Activated CD8-positive, alpha-beta T cell treated with anti-CD3 and anti-CD28 coated beads, Interleukin-2, amount 10 ng/mL, durations not matched to agents 7 days and 5 days (primary cell): ENCODE measurements at regions of chr2 and their contacts with region 1.

Region 1: DNA sequence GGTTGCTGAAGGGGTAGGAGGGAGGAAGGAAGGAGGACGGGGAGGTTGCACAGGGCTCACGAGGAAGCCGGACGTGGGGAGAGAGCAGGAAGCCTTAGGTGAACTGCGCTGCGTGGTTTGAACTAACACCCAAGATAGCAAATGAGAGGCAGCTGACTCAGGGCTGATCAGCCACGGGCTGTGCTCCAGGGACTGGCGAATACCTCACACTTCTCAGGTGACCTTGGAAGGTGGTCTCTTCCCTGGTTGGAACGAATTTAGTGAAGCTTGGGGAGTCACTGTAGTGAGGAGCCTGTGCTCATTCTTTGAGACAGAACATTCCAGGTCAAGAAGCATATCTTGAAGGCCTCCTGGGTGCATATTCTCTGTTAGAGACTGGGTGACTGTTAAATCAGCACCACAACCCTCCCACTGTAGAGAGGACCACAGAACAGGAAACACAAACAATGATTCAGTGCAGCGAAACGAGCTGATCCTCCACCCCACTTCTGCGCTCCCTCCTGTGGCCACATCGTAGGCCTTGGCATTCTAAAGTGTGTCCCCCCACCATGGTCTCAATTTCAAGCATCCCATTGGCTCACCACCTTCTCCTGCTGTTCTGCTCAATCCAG is 33.8 kb downstream of the TOGARAM2 start:
- DNase-seq: peak; percentile 90
- ATAC-seq: peak; percentile 79
- H3K4me3 Mint-ChIP-seq: peak overlapping the region; percentile 87
- H3K27ac Mint-ChIP-seq: peak overlapping the region; percentile 95
- H3K4me1 Mint-ChIP-seq: peaks cover 74% of the 10 kb centered on the region
- H3K27me3 Mint-ChIP-seq: no peaks in the 10 kb centered on the region

Region 2: DNA sequence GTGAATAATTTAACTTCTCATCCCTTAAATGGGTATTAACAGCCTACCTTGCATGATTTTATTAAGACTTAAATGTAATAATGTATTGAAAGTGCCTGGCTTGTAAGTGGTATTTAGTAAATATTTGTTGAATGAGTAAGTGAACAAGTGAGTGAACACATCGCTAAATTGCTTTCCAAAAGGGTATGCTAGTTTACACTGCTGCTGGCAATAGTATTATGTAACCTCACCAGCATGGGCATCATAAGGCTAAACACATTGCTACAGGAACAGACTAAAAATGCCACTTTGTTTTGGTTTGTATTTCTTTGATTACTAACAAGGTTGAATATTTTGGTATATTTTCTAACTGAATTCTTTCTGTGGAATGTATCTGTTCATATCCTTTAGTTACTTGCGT is 110.6 kb before region 1 on chr2:
- CTCF ChIA-PET with region 1: no interaction called
- POLR2A ChIA-PET with region 1: no interaction called
- DNase-seq: no peak
- ATAC-seq: no peak
- H3K4me3 Mint-ChIP-seq: no peak overlapping the region
- H3K27ac Mint-ChIP-seq: no peak overlapping the region
- H3K4me1 Mint-ChIP-seq: peaks cover 18% of the 10 kb centered on the region
- H3K27me3 Mint-ChIP-seq: no peaks in the 10 kb centered on the region

Region 3: DNA sequence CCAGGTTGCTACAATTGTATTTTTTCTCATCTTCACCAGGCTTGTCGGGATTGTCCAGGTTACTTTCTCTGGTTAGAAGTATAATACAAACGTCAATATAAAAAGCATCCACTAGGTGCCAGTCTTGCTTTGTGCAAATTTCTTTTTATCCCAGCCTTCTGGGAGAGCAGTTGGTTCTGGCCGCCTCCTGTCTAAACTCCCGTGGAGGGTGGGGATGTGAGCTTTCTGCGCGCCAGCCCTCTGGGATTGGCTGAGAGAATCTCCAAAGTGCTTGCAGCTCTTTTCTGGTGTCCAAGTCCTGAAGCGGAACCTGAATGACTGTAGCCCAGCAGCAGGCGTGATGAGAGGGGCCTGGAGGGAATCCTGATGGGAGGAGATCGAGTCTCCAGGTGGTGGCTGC is 56.2 kb before region 1 on chr2:
- CTCF ChIA-PET with region 1: interaction called, 18 read pairs
- POLR2A ChIA-PET with region 1: interaction called, 3 read pairs
- DNase-seq: peak; percentile 64
- ATAC-seq: peak; percentile 60
- H3K4me3 Mint-ChIP-seq: no peak overlapping the region
- H3K27ac Mint-ChIP-seq: no peak overlapping the region
- H3K4me1 Mint-ChIP-seq: peaks cover 19% of the 10 kb centered on the region
- H3K27me3 Mint-ChIP-seq: peaks cover 3% of the 10 kb centered on the region

Region 4: GRCh38 chr2:29000481-29000880 is 14.4 kb before region 1 on chr2:
- CTCF ChIA-PET with region 1: interaction called, 25 read pairs
- POLR2A ChIA-PET with region 1: interaction called, 6 read pairs
- DNase-seq: peak; percentile 64
- ATAC-seq: peak; percentile 88
- H3K4me3 Mint-ChIP-seq: peak overlapping the region; percentile 27
- H3K27ac Mint-ChIP-seq: peak overlapping the region; percentile 27
- H3K4me1 Mint-ChIP-seq: peaks cover 30% of the 10 kb centered on the region
- H3K27me3 Mint-ChIP-seq: peaks cover 4% of the 10 kb centered on the region

Region 5: GRCh38 chr2:29026189-29026588 is 11.3 kb after region 1 on chr2:
- CTCF ChIA-PET with region 1: interaction called, 10 read pairs
- POLR2A ChIA-PET with region 1: interaction called, 7 read pairs
- DNase-seq: no peak
- ATAC-seq: no peak
- H3K4me3 Mint-ChIP-seq: no peak overlapping the region
- H3K27ac Mint-ChIP-seq: no peak overlapping the region
- H3K4me1 Mint-ChIP-seq: peaks cover 11% of the 10 kb centered on the region
- H3K27me3 Mint-ChIP-seq: no peaks in the 10 kb centered on the region

Region 6: GRCh38 chr2:29115797-29116781 is 101.2 kb after region 1 on chr2:
- CTCF ChIA-PET with region 1: interaction called, 6 read pairs
- POLR2A ChIA-PET with region 1: interaction called, 23 read pairs
- DNase-seq: peak; percentile 86
- ATAC-seq: peak; percentile 62
- H3K4me3 Mint-ChIP-seq: peak overlapping the region; percentile 80
- H3K27ac Mint-ChIP-seq: peak overlapping the region; percentile 91
- H3K4me1 Mint-ChIP-seq: peaks cover 49% of the 10 kb centered on the region
- H3K27me3 Mint-ChIP-seq: peaks cover 16% of the 10 kb centered on the region